ENCODE measurements at regions of chr9 and their contacts with region 1.

Region 1: GRCh38 chr9:81682797-81683196 is 6.5 kb downstream of the TLE1 start:
- DNase-seq: no peak
- ATAC-seq: no peak

Region 2: GRCh38 chr9:81634915-81635516 is 47.8 kb before region 1 on chr9:
- intact Hi-C with region 1: loop called (anchors 1 kb)
- DNase-seq: no peak
- ATAC-seq: no peak

Region 3: GRCh38 chr9:81844131-81844567 is 161.4 kb after region 1 on chr9:
- intact Hi-C with region 1: no loop called
- DNase-seq: no peak
- ATAC-seq: no peak

Region 4: DNA sequence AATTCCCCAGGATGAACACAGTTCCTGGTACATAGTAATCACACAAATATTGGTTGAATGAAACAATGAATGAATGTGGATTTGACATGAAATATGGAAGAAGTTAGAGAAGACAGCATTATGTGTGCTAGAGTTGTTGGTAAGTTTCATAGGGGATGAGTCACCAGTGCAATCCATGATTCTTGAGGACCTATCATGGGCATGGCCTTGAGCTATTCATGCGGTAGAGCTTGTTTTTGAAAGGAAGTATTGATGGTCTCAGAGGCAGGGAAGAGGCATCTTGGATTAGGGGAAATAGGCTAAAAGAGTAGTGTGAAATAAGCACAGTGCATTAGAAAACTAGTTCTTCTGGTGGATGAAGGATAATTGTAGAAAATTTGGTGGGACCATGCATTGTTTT is 327.9 kb after region 1 on chr9:
- intact Hi-C with region 1: no loop called
- DNase-seq: no peak
- ATAC-seq: no peak

Measured in sciatic nerve (tissue), 2 donors.